ENCODE measurements at regions of chr13 and their contacts with region 1.

Region 1: DNA sequence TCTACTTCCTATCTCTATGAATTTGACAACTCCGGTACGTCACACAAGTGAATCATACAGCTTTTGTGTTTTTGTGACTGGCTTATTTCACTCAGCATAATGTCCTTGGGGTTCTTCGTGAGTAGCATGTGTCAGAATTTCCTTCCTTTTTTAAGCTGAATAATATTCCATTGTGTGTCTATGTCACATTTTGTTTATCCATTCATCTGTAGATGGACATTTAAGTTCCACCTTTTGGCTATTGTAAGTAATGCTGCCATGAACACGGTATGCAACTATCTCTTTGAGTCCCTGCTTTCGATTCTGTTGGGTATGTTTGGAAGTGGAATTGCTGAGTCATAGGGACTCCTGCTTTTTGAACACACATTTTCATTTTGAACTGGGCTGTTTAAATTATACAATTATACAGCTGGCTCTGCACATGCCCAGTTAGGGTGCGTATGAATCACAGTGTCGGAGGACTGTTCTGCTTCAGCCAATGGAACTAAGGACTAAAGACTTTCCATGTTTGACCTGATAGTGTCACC is 43.0 kb upstream of the C13orf42 start:
- DNase-seq: no peak
- ATAC-seq: no peak
- H3K4me3 ChIP-seq: no peak overlapping the region
- H3K27ac ChIP-seq: no peak overlapping the region
- H3K4me1 ChIP-seq: no peaks in the 10 kb centered on the region
- H3K27me3 ChIP-seq: peaks cover 10% of the 10 kb centered on the region; the same call in 1 of the 2 replicates
- CTCF ChIP-seq: no peak

Region 2: DNA sequence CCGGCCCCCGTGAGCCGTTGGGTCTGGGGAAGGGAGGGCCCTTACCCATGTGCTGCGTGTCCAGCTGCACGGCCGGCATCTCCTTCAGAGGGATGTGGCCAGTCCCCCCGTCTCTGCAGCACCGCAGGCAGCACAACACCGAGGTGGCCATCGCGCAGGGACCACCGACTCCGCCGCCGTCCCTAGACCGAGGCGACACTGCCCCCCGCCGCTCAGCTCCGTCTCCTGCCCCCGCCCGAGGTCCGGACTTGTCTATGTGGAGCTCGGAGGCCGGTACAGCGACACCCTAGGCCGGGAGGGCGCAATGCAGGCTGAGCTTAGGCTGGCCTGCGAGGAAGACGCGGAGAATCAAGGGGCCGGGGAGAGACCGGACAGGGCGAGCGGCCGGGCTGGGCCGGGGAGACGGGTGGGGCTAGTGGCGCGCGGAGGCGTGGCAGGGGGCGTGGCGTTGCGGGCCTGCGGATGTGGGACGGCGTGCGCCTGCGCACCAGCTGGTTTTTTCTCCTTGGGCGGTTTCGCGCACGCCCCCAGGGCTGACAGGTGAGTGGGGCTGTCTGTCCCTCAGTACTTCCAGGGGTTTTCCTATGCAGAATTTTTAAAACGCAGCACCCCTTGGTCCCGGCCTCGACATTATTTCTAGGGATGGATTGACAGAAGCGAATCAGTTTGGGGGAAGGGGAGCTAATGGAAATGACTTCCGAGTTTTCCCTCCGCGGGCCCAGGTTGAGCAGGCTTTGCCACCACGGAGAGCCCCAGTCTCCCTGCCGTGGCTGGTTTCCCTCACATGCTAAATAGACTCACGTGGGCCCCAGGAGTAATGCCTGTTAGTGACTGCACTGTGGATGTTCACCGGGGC is 1217.8 kb before region 1 on chr13 and contains the start of gene SPRYD7:
- CTCF ChIA-PET with region 1: no interaction called
- POLR2A ChIA-PET with region 1: interaction called, 18 read pairs
- in situ Hi-C with region 1: no loop called
- intact Hi-C with region 1: no loop called
- DNase-seq: peak; percentile 75
- ATAC-seq: peak; percentile 98
- H3K4me3 ChIP-seq: peak within 1 kb of the TSS; percentile 76 to 85
- H3K27ac ChIP-seq: peak within 1 kb of the TSS; percentile 79
- H3K4me1 ChIP-seq: peaks cover 8% of the 10 kb centered on the region; the same call in 1 of the 2 replicates
- H3K27me3 ChIP-seq: no peaks in the 10 kb centered on the region
- CTCF ChIP-seq: peak; percentile 91
- total RNA-seq, gene SPRYD7: 6.2 TPM

Region 3: DNA sequence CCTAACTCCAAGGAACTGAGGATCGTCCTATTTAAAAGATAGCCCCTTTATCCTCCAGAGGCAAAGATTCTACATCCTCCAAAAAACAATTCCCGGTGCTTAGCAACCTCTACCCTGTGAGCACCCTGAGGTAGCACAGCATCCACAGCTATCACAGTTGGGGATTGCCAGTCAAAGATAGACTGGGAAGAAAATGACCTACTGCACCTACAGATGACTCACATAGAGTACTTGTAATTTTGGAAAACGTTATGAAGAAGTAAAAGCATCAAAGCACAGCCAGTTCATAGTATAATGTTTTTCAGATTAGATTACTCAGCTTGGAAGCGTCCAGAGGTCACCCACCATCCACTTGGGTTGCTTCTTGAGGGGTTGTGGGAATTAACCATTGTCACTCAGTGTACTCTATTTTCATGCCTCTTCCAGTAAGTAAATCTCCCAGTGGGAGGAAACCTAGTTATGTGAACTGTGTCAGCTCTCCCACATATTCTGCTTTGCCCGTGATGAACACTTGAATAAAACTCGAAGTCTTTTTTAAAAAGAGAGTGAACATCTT is 59.2 kb after region 1 on chr13:
- CTCF ChIA-PET with region 1: no interaction called
- POLR2A ChIA-PET with region 1: no interaction called
- in situ Hi-C with region 1: no loop called
- intact Hi-C with region 1: no loop called
- DNase-seq: no peak
- ATAC-seq: no peak
- H3K4me3 ChIP-seq: no peak overlapping the region
- H3K27ac ChIP-seq: no peak overlapping the region
- H3K4me1 ChIP-seq: no peaks in the 10 kb centered on the region
- H3K27me3 ChIP-seq: peaks cover 14% of the 10 kb centered on the region
- CTCF ChIP-seq: no peak